A549 (cell line): ENCODE measurements at regions of chr15 and their contacts with region 1.

Region 1: GRCh38 chr15:64289550-64289949 is 66.4 kb downstream of the CSNK1G1 start:
- DNase-seq: no peak
- ATAC-seq: no peak
- H3K4me3 ChIP-seq: no peak overlapping the region
- H3K27ac ChIP-seq: no peak overlapping the region
- H3K4me1 ChIP-seq: peaks cover 24% of the 10 kb centered on the region
- CTCF ChIP-seq: no peak
- EP300 ChIP-seq: no peak
- POLR2A ChIP-seq: no peak
- RAD21 ChIP-seq: no peak

Region 2: DNA sequence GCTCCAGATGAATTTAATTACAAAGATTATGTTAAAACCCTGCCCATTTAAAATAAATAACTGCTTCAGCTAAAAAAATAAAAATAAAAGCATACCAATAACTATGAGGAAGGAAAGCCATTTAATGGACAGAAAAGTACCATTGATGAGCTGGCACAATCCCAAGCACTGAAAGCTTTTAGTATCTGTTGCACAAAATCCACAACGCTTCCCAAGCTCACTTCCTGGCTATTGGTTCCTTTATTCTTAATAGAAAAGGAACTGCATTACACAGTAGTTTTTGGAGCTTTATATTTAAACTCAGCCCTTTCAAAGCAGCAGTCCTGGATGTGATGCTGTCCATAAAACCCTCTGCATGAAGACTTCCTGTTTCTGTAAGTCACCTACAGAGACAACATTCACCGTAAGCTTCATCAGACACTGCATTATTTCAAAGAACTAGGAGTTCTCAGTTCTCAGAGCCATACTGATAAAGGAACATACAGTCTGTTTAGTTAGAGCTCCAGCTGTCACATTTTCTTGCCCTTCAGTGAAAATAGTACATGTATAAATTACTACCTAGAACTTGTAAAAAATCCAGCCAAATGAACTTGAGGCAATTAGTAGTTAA is 15.1 kb before region 1 on chr15:
- CTCF ChIA-PET with region 1: interaction called, 3 read pairs
- POLR2A ChIA-PET with region 1: interaction called, 11 read pairs
- DNase-seq: no peak
- ATAC-seq: no peak
- H3K4me3 ChIP-seq: no peak overlapping the region
- H3K27ac ChIP-seq: no peak overlapping the region
- H3K4me1 ChIP-seq: peaks cover 3% of the 10 kb centered on the region; the same call in 1 of the 3 replicates
- CTCF ChIP-seq: no peak
- EP300 ChIP-seq: no peak
- POLR2A ChIP-seq: no peak
- RAD21 ChIP-seq: no peak